GM12878 (cell line): ENCODE measurements at regions of chr2 and their contacts with region 1.

Region 1: DNA sequence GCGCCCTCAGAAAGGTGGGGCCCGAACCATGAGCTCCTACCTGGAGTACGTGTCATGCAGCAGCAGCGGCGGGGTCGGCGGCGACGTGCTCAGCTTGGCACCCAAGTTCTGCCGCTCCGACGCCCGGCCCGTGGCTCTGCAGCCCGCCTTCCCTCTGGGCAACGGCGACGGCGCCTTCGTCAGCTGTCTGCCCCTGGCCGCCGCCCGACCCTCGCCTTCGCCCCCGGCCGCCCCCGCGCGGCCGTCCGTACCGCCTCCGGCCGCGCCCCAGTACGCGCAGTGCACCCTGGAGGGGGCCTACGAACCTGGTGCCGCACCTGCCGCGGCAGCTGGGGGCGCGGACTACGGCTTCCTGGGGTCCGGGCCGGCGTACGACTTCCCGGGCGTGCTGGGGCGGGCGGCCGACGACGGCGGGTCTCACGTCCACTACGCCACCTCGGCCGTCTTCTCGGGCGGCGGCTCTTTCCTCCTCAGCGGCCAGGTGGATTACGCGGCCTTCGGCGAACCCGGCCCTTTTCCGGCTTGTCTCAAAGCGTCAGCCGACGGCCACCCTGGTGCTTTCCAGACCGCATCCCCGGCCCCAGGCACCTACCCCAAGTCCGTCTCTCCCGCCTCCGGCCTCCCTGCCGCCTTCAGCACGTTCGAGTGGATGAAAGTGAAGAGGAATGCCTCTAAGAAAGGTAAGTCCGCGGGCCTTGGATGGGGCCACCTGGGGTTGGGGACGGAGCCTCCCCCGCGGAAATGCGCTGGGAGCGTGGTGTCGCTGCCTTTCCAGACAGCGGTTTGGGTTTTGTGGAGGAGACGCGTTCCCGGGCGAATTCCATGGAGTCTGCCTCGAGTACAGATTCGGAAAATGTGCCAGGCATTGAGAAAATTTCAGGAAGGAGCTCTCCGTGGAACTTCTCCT is 559 bp downstream of the HOXD1 start:
- DNase-seq: no peak
- ATAC-seq: no peak
- H3K4me3 ChIP-seq: no peak overlapping the region
- H3K27ac ChIP-seq: no peak overlapping the region
- H3K4me1 ChIP-seq: no peaks in the 10 kb centered on the region
- H3K27me3 ChIP-seq: peaks cover 2 to 23% of the 10 kb centered on the region in 2 experiments
- CTCF ChIP-seq: no peak
- EP300 ChIP-seq: no peak
- POLR2A ChIP-seq: no peak
- RAD21 ChIP-seq: no peak

Region 2: GRCh38 chr2:175439416-175439815 is 749.6 kb before region 1 on chr2:
- CTCF ChIA-PET with region 1: no interaction called
- POLR2A ChIA-PET with region 1: no interaction called
- RAD21 ChIA-PET with region 1: no interaction called
- SMC1A ChIA-PET with region 1: no interaction called
- in situ Hi-C with region 1: no loop called
- intact Hi-C with region 1: no loop called
- DNase-seq: no peak
- ATAC-seq: no peak
- H3K4me3 ChIP-seq: no peak overlapping the region
- H3K27ac ChIP-seq: no peak overlapping the region
- H3K4me1 ChIP-seq: no peaks in the 10 kb centered on the region
- H3K27me3 ChIP-seq: no peaks in the 10 kb centered on the region
- CTCF ChIP-seq: no peak
- EP300 ChIP-seq: no peak
- POLR2A ChIP-seq: no peak
- RAD21 ChIP-seq: no peak

Region 3: DNA sequence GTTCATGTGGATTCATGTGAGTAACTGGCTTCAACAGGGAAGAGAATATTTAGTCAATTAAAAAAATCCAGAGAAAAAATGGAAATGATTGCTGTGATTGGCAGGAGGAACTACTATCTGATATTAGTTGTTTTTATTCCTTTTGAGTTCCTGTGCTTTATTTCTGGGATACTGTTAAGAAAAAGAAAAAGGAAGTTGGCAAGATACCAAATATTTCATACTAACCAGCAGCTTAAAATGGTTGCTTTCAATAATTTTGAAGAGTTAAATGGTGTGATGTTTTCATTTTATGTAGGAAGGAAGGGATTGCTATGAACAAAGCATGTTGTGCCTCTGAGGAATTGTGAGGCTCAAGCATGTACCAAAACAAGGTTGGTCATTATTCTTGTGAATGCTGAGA is 72.1 kb after region 1 on chr2:
- CTCF ChIA-PET with region 1: no interaction called
- POLR2A ChIA-PET with region 1: no interaction called
- RAD21 ChIA-PET with region 1: no interaction called
- SMC1A ChIA-PET with region 1: no interaction called
- in situ Hi-C with region 1: no loop called
- intact Hi-C with region 1: loop called (anchors 2 kb)
- DNase-seq: no peak
- ATAC-seq: no peak
- H3K4me3 ChIP-seq: no peak overlapping the region
- H3K27ac ChIP-seq: no peak overlapping the region
- H3K4me1 ChIP-seq: no peaks in the 10 kb centered on the region
- H3K27me3 ChIP-seq: no peaks in the 10 kb centered on the region
- CTCF ChIP-seq: no peak
- EP300 ChIP-seq: no peak
- POLR2A ChIP-seq: no peak
- RAD21 ChIP-seq: no peak